ENCODE measurements at regions of chr15 and their contacts with region 1.

Region 1: DNA sequence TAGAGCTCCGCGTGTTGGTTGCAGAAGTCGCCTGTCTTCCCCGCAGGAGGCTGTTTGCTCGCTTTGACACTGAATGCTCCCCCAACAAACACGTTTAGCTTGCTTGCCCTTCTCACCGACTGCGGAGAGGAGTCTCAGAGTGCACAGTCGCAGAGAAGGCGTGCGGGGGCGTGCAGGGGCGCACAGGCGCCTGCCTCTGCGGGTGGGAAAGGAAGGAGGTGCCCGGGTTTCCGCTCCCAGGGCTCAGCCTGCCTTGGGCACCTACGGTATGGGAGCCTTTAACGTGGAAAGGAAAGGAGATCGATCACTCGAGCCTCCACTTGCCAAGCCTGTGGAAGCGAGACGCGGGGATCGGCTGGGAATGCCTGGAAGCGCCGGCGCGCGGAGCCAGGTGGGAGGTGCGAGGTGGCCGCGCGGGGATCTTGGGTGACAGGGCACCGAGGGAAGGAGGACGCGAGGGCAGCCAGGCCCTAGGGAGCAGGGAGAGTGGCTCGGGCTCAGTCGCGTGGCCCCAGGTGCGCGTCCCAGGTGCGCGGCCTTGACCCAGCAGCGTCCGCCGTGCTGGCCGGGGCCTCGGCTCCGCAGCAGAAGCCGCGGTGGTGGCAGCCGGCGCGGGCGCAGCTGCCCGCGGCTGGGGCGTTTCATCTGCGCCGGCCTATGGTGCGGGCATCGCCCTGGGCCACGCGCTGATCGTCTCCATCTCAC is at the start of gene FAN1:
- DNase-seq: peak; percentile 75 to 96 (median 90)
- H3K4me3 ChIP-seq: peak within 1 kb of the TSS; percentile 51 to 98 (median 85)
- H3K27ac ChIP-seq: peak within 1 kb of the TSS; percentile 20 to 96 (median 87)
- H3K27me3 ChIP-seq: no peaks in the 10 kb centered on the region
- CTCF ChIP-seq: peak in 27 of 56 donors; percentile 13 to 53 (median 30)
- total RNA-seq, gene FAN1: 30.1 to 55.7 (median 39.8) TPM

Region 2: DNA sequence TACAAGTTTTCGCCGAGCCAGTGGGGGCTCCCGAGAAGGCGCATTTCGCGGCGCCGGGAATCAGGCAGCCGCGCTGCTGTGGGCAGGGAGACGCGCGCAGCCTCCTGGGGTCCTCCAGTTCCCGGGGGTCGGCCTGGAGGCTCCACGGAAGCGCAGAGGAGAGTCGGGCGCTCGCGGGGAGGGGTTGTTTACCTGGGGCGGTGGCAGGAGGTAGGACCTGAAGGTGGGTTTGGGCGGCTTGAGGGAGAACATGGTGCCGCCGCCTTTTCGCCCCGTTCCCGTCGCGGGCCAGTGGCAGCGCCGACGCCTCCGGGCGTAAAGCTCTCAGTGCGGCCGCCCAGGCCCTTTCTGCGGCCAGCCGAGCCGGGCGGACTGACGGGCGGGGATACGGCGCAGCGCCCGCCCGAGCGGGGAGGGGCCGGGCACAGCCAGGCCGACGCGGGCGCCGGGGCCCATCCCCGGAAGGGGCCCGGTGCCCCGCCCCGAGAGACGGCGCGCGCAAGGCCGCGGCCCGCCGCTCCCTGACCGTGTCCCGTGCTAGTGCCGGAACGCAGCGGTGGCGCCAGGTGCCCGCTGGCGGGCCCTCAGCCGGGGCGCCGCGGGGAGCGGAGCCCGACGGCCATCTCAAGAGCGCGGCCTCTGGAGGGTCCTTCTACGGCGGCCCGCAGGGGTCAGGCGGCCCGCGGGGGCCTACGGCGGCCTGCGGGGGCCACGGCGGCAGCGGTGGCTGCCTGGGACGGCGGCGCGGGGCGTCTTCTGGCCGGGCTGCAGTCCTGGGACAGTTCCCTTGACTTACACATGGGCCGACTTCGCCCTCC is 87.8 kb after region 1 on chr15 and contains the start of gene MTMR10:
- intact Hi-C with region 1: loop called (anchors 5 kb)
- DNase-seq: peak; percentile 42 to 85 (median 57)
- H3K4me3 ChIP-seq: peak within 1 kb of the TSS; percentile 67 to 100 (median 94)
- H3K27ac ChIP-seq: peak within 1 kb of the TSS; percentile 77 to 99 (median 95)
- H3K27me3 ChIP-seq: no peaks in the 10 kb centered on the region
- CTCF ChIP-seq: peak in 22 of 56 donors; percentile 7 to 40 (median 18)
- total RNA-seq, gene MTMR10: 33.2 to 154 (median 67.8) TPM

Region 3: GRCh38 chr15:31049682-31050615 is 146.3 kb after region 1 on chr15:
- intact Hi-C with region 1: no loop called
- DNase-seq: no peak
- H3K4me3 ChIP-seq: no peak overlapping the region
- H3K27ac ChIP-seq: no peak overlapping the region
- H3K27me3 ChIP-seq: no peaks in the 10 kb centered on the region
- CTCF ChIP-seq: no peak